Panc1 (cell line): ENCODE measurements at regions of chr14 and their contacts with region 1.

Region 1: DNA sequence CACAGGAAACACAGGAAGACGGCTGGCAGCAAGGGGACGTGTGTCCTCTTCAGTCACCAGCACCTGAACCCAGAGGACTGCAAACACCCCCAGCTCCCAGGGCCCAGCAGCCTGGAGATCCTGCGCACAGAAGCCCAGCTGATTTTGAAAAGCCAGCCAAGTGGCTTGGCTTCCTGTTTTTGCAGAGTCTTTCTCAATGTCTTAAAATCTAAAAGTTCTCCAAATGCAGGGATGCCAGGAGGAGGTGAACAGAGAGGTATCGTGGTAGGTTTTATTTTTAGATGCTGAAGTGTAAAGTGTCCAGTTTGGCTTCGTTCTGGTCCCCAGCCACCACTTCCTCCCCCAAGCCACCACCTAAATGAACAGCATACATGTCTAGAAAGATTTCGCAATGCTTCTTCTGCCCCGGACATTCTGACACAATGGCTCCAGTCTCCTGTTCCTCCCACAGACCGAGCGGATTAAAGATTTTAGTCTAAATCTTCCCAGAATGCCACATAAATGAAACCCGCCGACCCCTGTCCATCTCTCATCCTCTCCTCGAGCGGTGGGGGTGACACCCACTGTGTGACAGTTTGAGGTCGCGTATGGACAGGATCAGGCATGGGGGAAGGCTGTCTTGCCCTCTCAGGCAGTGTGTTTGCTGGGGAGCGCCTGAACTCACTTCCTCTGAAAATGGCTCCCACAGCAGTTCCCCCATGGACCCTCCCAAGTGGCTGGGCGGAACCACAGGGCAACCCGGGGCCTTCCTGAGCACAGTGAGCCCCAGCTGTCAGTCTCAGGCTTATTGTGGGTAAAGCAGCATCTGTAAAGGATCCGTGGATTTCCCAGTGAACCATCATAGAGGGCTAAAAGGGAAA is 41.6 kb downstream of the ITPK1 start:
- DNase-seq: no peak
- ATAC-seq: no peak
- H3K4me3 ChIP-seq: no peak overlapping the region
- H3K27ac ChIP-seq: no peak overlapping the region
- H3K4me1 ChIP-seq: no peaks in the 10 kb centered on the region
- H3K27me3 ChIP-seq: no peaks in the 10 kb centered on the region
- CTCF ChIP-seq: no peak

Region 2: GRCh38 chr14:93025844-93026243 is 48.3 kb before region 1 on chr14:
- CTCF ChIA-PET with region 1: no interaction called
- POLR2A ChIA-PET with region 1: interaction called, 15 read pairs
- in situ Hi-C with region 1: no loop called
- intact Hi-C with region 1: no loop called
- DNase-seq: no peak
- ATAC-seq: no peak
- H3K4me3 ChIP-seq: no peak overlapping the region
- H3K27ac ChIP-seq: no peak overlapping the region
- H3K4me1 ChIP-seq: no peaks in the 10 kb centered on the region
- H3K27me3 ChIP-seq: no peaks in the 10 kb centered on the region
- CTCF ChIP-seq: no peak